ENCODE measurements at regions of chr1 and their contacts with region 1.

Region 1: DNA sequence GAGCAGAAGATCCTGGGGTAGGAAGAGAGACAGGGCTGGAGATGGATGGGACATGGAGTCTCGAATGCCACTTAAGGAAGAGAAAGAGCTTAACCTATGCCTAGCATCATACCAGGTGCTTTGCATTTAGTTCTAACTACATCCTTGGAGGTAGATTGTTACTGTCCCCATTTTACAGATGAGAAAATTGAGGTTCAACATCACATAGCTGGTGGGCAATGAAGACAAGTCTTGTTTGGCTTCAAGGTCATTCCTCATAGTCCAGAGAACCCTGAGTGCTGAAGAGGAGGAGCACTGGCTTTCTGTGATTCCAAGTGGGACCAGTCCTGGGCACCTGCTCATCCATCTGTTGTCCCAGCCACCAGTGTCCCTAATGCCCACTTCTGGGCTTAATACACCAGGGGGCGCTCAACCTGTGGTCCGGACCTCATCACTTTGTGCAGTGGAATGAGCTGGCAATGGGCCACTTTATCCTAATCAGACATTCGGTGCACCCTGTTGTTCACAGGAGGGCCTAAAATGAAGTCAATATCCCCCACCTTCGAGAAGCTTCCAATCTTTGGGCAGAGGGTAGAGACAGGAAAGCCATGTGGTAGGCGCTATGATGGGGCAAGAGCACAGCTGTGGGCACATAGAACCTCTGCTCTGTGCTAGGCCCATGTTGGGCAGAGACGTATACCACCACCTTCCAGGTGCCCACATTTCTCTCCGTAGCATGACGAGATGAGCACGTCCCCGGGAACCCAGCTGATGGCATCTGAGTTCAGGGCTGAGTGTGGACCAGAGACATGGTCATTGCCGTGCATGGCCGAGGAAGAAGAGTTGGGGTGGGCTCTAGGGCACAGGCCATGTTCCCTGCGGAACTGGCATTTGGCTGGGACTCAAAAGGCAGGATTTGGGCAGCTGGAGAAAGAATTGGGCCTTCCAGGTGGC is 9.2 kb downstream of the RPS6KA1 start:
- DNase-seq: no peak
- H3K4me3 ChIP-seq: no peak overlapping the region
- H3K27me3 ChIP-seq: no peaks in the 10 kb centered on the region
- CTCF ChIP-seq: peak; percentile 54

Region 2: DNA sequence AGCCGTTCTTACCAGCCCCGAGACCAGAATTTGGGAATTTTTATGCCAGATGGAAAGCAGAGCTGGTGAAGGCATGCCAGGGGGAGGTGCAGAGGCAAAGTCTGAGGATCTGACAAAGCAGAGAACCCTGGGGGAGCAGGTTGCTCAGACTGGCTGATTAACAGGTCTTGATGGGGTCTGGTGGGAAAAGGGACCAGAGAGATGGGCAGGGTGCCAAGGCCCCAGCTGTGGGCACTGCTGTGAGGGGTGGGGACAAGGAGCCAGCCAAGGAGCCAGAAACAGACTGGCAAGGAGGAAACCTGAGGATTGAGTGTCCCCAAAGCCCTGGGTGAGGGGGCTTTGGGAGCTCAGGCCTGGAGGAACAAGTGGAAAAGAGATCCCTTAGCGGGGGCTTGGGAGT is 12.2 kb after region 1 on chr1:
- CTCF ChIA-PET with region 1: interaction called, 22 read pairs
- POLR2A ChIA-PET with region 1: interaction called, 7 read pairs
- DNase-seq: no peak
- H3K4me3 ChIP-seq: no peak overlapping the region
- H3K27me3 ChIP-seq: no peaks in the 10 kb centered on the region
- CTCF ChIP-seq: no peak